ENCODE measurements at regions of chr13 and their contacts with region 1.

Region 1: GRCh38 chr13:98445340-98446233 is 131.3 kb downstream of the STK24 start:
- DNase-seq: peak; percentile 68 to 70
- H3K4me3 ChIP-seq: no peak overlapping the region
- H3K27ac ChIP-seq: peak overlapping the region in 2 of 3 donors; percentile 40 to 55
- H3K4me1 ChIP-seq: peaks cover 0 to 19% of the 10 kb centered on the region in 2 donors
- H3K27me3 ChIP-seq: no peaks in the 10 kb centered on the region
- CTCF ChIP-seq: peak; percentile 83 to 98 (median 94)
- POLR2A ChIP-seq: no peak

Region 2: DNA sequence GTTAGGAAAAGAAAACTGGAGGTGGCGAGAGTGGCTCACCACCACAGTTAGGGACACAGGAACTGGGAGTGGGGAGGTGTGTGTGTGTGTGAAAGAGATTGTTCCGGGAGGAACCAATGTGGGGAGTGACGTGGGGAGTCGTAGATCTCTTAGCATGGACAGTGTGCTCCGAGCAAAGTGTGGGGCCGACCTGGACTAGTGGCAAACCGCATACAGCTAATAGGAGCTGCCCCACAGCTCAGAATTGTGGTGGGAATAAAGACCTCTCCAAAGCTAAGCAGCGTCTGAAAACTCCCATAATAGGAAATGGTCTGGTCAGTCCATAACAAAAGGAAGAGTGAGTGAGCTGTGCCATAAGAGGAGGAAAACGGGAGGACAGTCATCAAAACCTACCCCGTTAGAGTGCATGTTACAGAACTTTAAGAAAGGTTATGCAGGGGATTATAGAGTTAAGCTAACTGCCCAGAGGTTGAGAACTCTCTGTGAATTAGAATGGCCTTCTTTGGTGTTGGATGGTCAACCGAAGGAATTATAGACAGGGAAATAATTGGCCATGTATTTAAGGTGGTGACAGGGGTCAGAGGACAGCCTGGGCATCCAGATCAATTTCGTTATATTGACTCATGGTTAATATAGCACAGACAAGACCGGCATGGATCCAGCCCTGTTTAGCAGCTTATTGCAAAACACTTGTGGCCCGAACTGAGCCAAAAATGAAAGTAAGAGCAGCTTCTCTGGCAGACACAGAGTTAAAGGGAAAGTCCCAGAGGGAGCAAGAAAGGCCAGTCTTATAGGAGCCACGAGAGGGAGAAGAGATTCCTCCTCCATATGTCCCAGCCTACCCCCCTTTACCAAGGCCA is 315.8 kb after region 1 on chr13:
- intact Hi-C with region 1: no loop called
- DNase-seq: no peak
- H3K4me3 ChIP-seq: no peak overlapping the region
- H3K27ac ChIP-seq: no peak overlapping the region
- H3K4me1 ChIP-seq: no peaks in the 10 kb centered on the region
- H3K27me3 ChIP-seq: no peaks in the 10 kb centered on the region
- CTCF ChIP-seq: no peak
- POLR2A ChIP-seq: no peak

Region 3: GRCh38 chr13:98842864-98843481 is 397.4 kb after region 1 on chr13:
- intact Hi-C with region 1: loop called (anchors 5 kb)
- DNase-seq: peak; percentile 55 to 68
- H3K4me3 ChIP-seq: no peak overlapping the region
- H3K27ac ChIP-seq: no peak overlapping the region
- H3K4me1 ChIP-seq: peaks cover 0 to 5% of the 10 kb centered on the region in 2 donors
- H3K27me3 ChIP-seq: no peaks in the 10 kb centered on the region
- CTCF ChIP-seq: peak; percentile 33 to 86 (median 68)
- POLR2A ChIP-seq: no peak

Measured in thyroid gland (tissue), 4 donors.